ENCODE measurements at regions of chr6 and their contacts with region 1.

Region 1: DNA sequence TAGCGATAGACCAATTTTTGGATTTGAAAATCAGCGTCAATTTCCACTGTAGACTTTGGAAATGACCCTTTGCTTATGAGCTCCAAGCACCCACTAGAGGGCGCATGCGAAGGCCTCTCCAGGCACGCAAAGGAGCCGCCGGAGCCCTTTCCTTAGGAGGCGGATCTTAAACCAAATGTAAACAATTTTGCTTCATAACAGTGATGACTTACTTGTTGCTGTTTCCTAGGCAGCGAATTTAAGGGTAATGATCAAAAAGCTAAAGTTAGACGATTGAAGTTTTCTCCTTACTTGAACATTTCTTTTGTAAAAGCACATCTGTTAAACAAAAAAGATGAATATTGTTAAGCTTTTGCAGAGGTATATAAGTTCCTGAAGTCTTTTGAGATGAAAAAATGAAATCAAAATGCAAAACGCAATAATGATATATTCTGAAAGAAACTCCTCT is 29.2 kb upstream of the EXOC2 start:
- DNase-seq: peak; percentile 79
- CTCF ChIP-seq: peak; percentile 93

Region 2: DNA sequence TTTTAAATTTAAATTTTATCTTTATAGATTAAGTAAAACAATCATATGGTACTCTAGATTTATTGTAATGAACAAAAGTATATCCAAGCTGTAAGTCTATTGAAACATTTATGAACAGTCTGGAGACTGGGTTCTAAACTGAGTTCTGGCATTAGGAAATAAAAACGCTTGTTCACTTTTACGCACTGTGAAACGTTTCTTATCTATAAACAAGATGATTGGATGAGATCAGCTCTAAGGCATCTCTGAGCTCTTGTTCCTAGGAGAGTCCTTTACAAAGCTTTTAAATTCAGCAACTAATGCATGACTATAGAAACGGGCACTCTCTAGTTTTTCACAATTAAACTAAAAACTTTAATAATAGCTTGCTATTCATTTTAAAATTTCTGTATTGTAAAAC is 72.0 kb before region 1 on chr6:
- CTCF ChIA-PET with region 1: no interaction called
- POLR2A ChIA-PET with region 1: no interaction called
- DNase-seq: no peak
- CTCF ChIP-seq: no peak

Region 3: GRCh38 chr6:704046-704445 is 18.1 kb before region 1 on chr6:
- CTCF ChIA-PET with region 1: interaction called, 10 read pairs
- POLR2A ChIA-PET with region 1: no interaction called
- DNase-seq: no peak
- CTCF ChIP-seq: no peak

Region 4: DNA sequence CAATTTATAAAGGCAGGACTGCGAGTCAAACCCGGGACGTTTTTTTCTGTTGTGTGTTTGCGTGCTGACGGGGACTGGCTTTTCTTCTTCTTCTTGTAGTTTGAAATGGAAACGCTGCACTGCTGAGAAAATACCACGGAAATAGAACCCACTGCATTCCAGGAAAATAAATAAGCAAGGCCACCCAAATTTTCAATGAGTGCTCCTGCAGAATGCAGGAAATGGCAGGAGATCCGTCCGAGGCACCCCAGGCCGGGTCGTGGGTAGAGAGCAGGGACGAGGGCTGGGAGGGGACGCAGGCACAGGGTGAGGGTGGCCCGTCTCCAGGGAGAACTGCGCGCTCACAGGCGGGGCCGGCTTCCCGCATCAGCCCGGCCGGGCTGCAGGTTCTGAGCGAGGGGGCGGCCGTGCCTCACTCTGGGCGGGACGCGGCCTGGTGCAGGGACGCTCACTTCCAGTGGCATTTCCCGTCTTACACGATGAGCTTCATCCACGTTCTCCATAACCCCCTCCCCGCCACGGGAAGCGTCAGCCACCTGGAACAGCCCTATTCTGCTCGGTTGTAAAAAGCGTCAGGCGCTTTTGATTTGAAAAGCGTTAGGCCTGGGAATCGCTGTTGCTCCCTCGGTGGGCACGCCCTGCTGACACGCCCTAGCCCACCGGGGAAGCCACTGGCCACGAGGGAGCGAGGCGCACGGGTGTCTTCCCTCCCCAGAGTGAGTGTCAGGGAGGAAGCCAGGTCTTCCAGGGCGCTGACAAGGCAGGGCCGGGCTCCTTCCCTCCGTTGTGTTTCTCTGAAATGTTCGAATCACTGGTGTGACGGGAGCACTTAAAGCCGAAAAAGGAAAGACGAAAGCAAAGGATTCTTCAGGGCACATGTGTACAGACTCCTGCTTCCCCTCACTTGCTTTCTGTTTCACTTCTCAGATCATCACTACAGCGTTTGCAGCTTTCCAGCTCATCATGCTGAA is 11.2 kb before region 1 on chr6:
- CTCF ChIA-PET with region 1: interaction called, 17 read pairs
- POLR2A ChIA-PET with region 1: no interaction called
- DNase-seq: peak; percentile 83
- CTCF ChIP-seq: no peak

Region 5: GRCh38 chr6:733431-734219 is 11.5 kb after region 1 on chr6:
- CTCF ChIA-PET with region 1: interaction called, 49 read pairs
- POLR2A ChIA-PET with region 1: no interaction called
- DNase-seq: no peak
- CTCF ChIP-seq: no peak

Region 6: GRCh38 chr6:1436334-1437306 is 714.5 kb after region 1 on chr6:
- CTCF ChIA-PET with region 1: interaction called, 11 read pairs
- POLR2A ChIA-PET with region 1: no interaction called
- DNase-seq: peak; percentile 83
- CTCF ChIP-seq: peak; percentile 57